ENCODE measurements at regions of chrX and their contacts with region 1.

Region 1: GRCh38 chrX:68828740-68829552 is at the start of gene EFNB1:
- DNase-seq: peak; percentile 81 to 98 (median 86)

Region 2: DNA sequence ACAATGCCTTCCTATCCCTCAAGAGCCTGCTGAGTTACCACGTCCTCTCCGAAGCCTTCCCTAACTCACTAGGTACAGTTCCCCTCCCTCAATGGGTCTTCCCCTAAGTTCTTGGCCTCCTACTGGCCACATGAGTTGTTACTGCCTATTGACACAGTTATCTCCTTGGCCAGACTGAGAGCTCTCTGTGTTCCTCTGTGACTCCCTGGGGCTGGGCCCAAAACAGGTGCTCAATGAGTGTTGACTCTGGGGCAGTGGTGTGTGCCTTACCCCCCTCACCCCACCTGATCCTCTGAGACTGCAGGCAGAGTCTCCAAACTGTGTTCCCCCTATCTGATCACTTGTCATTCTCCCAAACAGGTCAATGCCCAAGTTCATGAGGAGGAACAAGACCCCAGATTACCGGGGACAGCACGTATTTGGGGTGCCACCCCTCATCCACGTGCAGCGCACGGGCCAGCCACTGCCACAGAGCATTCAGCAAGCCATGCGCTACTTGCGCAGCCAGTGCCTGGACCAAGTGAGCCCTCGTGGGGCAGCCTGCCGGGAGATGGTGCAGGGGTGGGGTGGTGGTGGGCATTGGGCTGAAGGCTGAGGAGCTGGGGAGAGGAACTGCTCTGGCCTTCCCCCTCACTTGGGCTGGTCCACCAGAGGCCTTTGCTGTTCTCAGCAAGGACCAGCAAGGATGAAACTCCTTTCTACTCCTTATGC is 108.9 kb before region 1 on chrX:
- intact Hi-C with region 1: no loop called
- DNase-seq: peak in 2 of 10 donors; percentile 56 to 73

Region 3: GRCh38 chrX:69222103-69223090 is 393.5 kb after region 1 on chrX:
- intact Hi-C with region 1: loop called (anchors 1 kb)
- DNase-seq: peak; percentile 38 to 95 (median 74)

Region 4: DNA sequence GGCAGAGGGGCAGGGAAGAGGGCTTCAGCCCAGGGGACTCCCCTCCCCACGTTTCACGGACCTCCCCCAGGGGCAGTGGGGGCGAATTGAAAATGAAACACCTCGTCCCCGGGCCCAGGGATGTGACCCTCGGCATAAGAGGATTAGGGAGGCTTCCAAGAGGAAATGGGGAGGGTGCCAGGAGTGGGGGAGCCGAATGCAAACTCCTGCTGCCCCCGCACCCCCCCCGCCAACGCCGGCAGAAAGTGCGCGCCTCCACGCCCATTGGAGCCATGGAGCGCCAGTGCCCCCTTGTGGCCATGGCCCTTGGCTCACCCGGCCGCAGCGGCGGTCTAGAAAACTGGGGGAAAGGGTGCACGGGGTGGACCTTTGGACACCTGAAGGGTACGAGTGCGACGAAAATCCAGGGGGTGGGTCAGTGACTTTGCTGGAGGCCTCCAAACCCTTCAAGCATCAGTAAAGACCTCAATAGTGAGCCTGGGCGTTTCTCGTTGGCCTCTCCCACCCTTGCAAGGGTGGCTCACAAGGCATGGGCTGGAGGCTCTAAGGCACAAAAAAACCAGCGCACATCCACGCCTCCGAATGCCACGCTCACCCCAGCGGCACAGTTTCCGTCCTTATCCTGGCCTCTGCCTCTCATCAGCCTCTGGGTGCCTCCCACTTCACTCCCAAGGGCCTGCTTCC is 457.1 kb after region 1 on chrX:
- intact Hi-C with region 1: loop called (anchors 1 kb)
- DNase-seq: peak in 9 of 10 donors; percentile 32 to 92 (median 60)

Region 5: GRCh38 chrX:69387567-69388487 is 558.9 kb after region 1 on chrX:
- intact Hi-C with region 1: loop called (anchors 5 kb)
- DNase-seq: peak in 6 of 10 donors; percentile 31 to 87 (median 34)

Region 6: DNA sequence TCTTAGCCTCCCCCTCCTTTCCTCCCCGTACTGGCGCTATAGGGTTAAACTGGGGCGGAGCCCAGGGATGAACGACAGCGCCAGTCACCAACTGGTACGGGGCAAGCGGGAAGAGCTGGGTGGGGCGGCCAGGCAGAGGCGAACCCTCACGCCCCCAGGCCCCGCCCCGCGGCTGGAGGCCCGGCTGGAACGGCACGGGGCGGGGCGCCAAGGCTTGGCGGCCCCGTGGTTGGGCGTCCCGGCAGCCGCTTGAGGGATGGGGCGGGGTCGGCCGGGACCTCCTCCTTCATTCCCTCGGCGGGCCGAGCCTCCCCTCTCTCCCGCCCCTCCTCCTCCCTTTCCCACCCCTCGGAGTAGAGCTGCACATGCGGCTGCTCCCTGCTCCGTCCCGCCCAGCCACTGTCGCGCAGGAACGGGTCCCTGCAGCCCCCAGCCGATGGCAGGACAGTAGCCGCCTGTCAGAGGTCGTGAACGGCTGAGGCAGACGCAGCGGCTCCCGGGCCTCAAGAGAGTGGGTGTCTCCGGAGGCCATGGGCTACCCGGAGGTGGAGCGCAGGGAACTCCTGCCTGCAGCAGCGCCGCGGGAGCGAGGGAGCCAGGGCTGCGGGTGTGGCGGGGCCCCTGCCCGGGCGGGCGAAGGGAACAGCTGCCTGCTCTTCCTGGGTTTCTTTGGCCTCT is 787.0 kb after region 1 on chrX and contains the start of gene EDA:
- intact Hi-C with region 1: loop called (anchors 10 kb)
- DNase-seq: peak; percentile 67 to 98 (median 74)